ENCODE measurements at regions of chr17 and their contacts with region 1.

Region 1: DNA sequence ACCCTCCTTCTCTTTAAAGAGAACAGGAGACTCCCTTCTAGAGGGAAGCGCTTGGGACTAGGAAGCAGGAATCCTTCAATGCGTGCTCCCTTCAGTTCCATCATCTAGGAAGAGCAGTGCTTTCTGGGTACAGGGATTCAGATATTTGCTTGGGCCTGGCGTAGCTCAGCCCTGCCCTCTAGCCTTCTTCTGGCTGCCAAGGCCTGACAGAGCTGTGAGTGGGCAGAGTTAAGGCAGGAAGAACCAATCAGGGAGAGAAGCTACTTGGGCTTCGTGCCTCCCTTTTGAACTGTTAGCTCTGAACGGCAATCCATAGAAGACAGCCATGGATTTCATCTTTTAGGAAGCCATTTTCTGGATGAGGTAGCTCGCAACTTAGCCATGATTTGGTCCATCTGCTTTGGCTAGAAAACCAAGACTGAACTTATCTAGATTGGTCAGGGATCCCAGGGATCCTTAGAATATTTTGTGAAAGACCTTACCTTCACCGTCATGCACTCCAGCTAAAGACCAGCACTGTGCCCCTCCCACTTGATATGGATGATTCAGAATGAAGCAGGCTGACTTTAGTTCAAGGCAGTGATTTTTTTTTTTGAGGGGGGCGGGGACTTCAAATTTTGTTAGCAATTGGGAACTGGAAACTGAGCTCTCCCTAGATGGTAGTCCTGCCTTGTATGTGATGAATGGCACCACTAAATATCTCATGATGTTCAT is 2.5 kb upstream of the CORO6 start:
- DNase-seq: no peak
- H3K4me3 ChIP-seq: no peak overlapping the region
- H3K4me3 Mint-ChIP-seq: peak overlapping the region in 1 of 7 donors; percentile 56
- H3K27ac ChIP-seq: no peak overlapping the region
- H3K27ac Mint-ChIP-seq: peak overlapping the region in 5 of 8 donors; percentile 3 to 88 (median 47)
- H3K4me1 ChIP-seq: peaks cover 22% of the 10 kb centered on the region
- H3K4me1 Mint-ChIP-seq: peaks cover 30 to 54% (median 48%) of the 10 kb centered on the region in 3 donors
- H3K27me3 ChIP-seq: no peaks in the 10 kb centered on the region
- H3K27me3 Mint-ChIP-seq: no peaks in the 10 kb centered on the region

Region 2: GRCh38 chr17:29640413-29640812 is 15.2 kb after region 1 on chr17:
- CTCF ChIA-PET with region 1: interaction called, 10 read pairs
- POLR2A ChIA-PET with region 1: interaction called, 4 read pairs
- DNase-seq: no peak
- H3K4me3 ChIP-seq: no peak overlapping the region
- H3K4me3 Mint-ChIP-seq: peak overlapping the region in 1 of 7 donors; percentile 27
- H3K27ac ChIP-seq: no peak overlapping the region
- H3K27ac Mint-ChIP-seq: peak overlapping the region in 7 of 8 donors; percentile 3 to 76 (median 45)
- H3K4me1 ChIP-seq: no peaks in the 10 kb centered on the region
- H3K4me1 Mint-ChIP-seq: peaks cover 11 to 19% (median 12%) of the 10 kb centered on the region in 3 donors
- H3K27me3 ChIP-seq: no peaks in the 10 kb centered on the region
- H3K27me3 Mint-ChIP-seq: no peaks in the 10 kb centered on the region

Region 3: GRCh38 chr17:29954405-29954804 is 329.2 kb after region 1 on chr17:
- CTCF ChIA-PET with region 1: no interaction called
- POLR2A ChIA-PET with region 1: interaction called, 10 read pairs
- DNase-seq: no peak
- H3K4me3 ChIP-seq: no peak overlapping the region
- H3K4me3 Mint-ChIP-seq: no peak overlapping the region
- H3K27ac ChIP-seq: no peak overlapping the region
- H3K27ac Mint-ChIP-seq: peak overlapping the region in 1 of 8 donors; percentile 26
- H3K4me1 ChIP-seq: no peaks in the 10 kb centered on the region
- H3K4me1 Mint-ChIP-seq: no peaks in the 10 kb centered on the region
- H3K27me3 ChIP-seq: no peaks in the 10 kb centered on the region
- H3K27me3 Mint-ChIP-seq: peaks cover 0 to 4% of the 10 kb centered on the region in 2 donors